AG04450 (cell line): ENCODE measurements at regions of chr12 and their contacts with region 1.

Region 1: DNA sequence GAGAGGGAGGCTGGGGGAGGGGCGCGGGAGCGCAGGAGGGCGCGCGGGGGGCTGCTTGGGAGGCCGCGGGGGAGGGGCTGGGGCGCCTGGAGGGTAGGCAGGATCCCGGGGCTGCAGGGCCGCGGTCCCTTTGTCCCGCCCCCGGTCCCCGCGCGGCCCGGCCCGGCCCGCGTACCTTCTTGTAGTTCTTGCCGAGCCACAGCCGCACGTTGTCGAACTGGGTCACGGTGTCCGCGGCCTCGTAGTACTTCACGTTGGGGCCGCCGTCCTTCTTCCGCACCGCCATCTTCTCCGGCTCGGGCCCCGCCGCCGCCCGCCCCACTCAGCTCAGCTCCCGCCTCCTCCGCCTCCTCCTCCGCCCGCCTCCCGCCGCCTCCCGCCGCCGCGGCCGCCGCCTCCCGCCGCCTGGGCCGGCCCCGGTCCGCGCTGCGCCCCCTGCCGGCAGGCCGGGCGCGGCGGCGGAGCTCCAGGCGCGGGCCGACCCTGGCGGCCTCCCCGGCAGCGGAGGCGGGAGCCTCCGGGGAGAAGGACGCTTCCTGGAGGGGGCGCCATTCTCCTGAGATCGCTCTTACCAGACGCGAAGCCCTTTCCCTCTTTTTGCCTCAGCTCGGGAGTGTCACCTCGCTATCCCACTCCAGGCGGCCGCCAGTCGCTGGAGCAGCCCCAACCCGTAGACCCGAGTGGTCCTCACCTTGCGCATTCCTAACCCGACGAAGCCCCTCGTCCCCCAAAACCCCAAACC is at the start of gene SMARCC2:
- DNase-seq: peak; percentile 65
- H3K4me3 ChIP-seq: peak within 1 kb of the TSS; percentile 88
- H3K27ac ChIP-seq: peak within 1 kb of the TSS; percentile 83
- H3K27me3 ChIP-seq: no peaks in the 10 kb centered on the region
- CTCF ChIP-seq: peak; percentile 66
- polyA plus RNA-seq, gene SMARCC2: 90.2 and 101 TPM in 2 replicates

Region 2: GRCh38 chr12:56117778-56118687 is 71.3 kb before region 1 on chr12 and contains the start of gene ZC3H10:
- CTCF ChIA-PET with region 1: interaction called, 96 read pairs
- POLR2A ChIA-PET with region 1: interaction called, 30 read pairs
- DNase-seq: peak; percentile 99
- H3K4me3 ChIP-seq: peak within 1 kb of the TSS; percentile 93
- H3K27ac ChIP-seq: peak within 1 kb of the TSS; percentile 90
- H3K27me3 ChIP-seq: no peaks in the 10 kb centered on the region
- CTCF ChIP-seq: peak; percentile 62
- polyA plus RNA-seq, gene ZC3H10: 1.5 and 1.9 TPM in 2 replicates

Region 3: DNA sequence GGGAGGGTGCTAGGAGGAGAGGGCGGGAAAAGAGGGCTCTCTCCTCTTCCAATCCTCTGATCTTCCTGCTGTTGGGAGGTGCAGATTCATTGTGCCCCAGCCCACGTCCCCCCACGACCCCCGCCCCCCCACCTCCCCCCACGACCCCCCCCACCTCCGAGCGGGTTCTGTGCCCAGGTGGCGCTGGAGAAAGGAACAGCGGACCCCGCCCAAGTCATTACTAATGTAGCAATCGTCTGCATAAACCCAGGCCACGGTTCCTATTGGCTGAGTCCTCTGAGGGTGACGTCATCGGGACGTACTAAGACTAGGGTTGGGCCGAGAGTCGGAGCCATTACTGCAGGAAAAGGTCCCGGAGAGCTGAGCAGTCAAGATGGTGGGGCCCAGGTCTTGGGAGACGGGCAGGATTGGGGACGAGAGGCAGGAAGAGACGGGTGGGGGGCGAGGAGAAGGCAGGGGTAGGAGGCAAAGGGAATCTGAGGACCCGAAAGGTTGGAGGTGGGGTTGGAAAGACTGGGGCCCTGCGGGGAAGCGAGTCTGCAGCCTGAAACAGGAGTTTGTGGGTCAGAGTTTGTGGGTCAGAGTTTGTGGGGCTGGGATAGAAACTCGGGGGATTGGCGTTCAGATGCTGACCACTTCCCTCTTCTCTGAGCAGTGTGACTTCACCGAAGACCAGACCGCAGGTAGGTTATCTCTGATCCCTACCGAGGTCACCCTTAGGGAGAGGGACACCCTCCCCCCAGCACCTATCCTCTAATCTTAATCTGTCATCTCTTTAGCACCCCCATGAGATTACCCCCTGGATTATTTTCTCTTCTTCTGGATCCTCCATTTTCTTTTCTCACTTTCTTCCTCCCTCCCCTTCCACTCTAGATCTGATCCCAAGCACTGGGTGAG is 31.1 kb before region 1 on chr12 and contains the start of gene MYL6:
- CTCF ChIA-PET with region 1: interaction called, 11 read pairs
- POLR2A ChIA-PET with region 1: interaction called, 8 read pairs
- DNase-seq: peak; percentile 95
- H3K4me3 ChIP-seq: peak within 1 kb of the TSS; percentile 99
- H3K27ac ChIP-seq: peak within 1 kb of the TSS; percentile 95
- H3K27me3 ChIP-seq: no peaks in the 10 kb centered on the region
- CTCF ChIP-seq: no peak
- polyA plus RNA-seq, gene MYL6: 5,661 and 5,957 TPM in 2 replicates

Region 4: GRCh38 chr12:56206457-56207166 is 17.3 kb after region 1 on chr12:
- CTCF ChIA-PET with region 1: interaction called, 15 read pairs
- POLR2A ChIA-PET with region 1: no interaction called
- DNase-seq: no peak
- H3K4me3 ChIP-seq: no peak overlapping the region
- H3K27ac ChIP-seq: no peak overlapping the region
- H3K27me3 ChIP-seq: no peaks in the 10 kb centered on the region
- CTCF ChIP-seq: peak; percentile 65

Region 5: GRCh38 chr12:56224102-56224701 is 34.9 kb after region 1 on chr12 and contains the start of gene NABP2:
- CTCF ChIA-PET with region 1: interaction called, 73 read pairs
- POLR2A ChIA-PET with region 1: interaction called, 24 read pairs
- DNase-seq: peak; percentile 92
- H3K4me3 ChIP-seq: peak within 1 kb of the TSS; percentile 82
- H3K27ac ChIP-seq: peak within 1 kb of the TSS; percentile 73
- H3K27me3 ChIP-seq: no peaks in the 10 kb centered on the region
- CTCF ChIP-seq: peak; percentile 82
- polyA plus RNA-seq, gene NABP2: 46.9 and 52.5 TPM in 2 replicates

Region 6: GRCh38 chr12:56476972-56477432 is 287.7 kb after region 1 on chr12:
- CTCF ChIA-PET with region 1: no interaction called
- POLR2A ChIA-PET with region 1: no interaction called
- DNase-seq: no peak
- H3K4me3 ChIP-seq: no peak overlapping the region
- H3K27ac ChIP-seq: no peak overlapping the region
- H3K27me3 ChIP-seq: no peaks in the 10 kb centered on the region
- CTCF ChIP-seq: no peak

Region 7: DNA sequence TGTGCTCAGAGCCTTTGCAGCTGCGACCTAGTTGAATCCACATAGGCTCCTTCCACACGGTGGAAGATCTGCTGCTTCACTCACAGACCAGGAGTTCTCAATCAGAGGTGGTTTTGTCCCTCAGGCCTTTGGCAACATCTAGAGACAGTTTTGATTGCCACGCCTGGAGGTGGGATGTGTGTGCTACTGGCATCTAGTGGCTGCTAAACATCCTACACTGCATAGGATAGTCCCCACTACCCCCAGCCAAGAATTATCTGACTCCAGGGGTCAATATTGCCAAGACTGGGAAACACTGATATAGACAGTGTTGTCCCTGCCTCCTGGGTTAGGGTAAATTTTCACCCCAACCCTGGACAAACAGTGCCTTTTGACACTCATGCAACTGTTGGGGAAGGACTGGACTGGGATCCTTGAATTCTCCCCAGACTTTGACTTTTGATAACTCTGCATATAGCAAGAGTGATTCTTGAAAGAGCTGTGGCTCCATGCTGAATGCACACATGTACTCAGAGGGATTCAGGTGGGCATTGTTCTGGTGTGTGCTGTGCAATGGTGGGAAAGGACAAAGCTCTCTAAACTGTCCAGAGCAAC is 401.0 kb after region 1 on chr12:
- CTCF ChIA-PET with region 1: no interaction called
- POLR2A ChIA-PET with region 1: no interaction called
- DNase-seq: no peak
- H3K4me3 ChIP-seq: no peak overlapping the region
- H3K27ac ChIP-seq: no peak overlapping the region
- H3K27me3 ChIP-seq: no peaks in the 10 kb centered on the region
- CTCF ChIP-seq: peak; percentile 48